Common myeloid progenitor, CD34-positive (primary cell): ENCODE measurements at regions of chr16 and their contacts with region 1.

Region 1: GRCh38 chr16:57653936-57654335 is 14.2 kb upstream of the ADGRG3 start:
- DNase-seq: peak in 2 of 3 donors; percentile 52 to 55
- H3K4me3 ChIP-seq: peak overlapping the region in 2 of 7 experiments; percentile 1 to 19
- H3K27ac ChIP-seq: peak overlapping the region in 1 of 2 experiments; percentile 77
- H3K4me1 ChIP-seq: peaks cover 0 to 47% (median 35%) of the 10 kb centered on the region in 4 experiments
- H3K27me3 ChIP-seq: no peaks in the 10 kb centered on the region

Region 2: GRCh38 chr16:57667526-57668258 is 13.8 kb after region 1 on chr16:
- CTCF ChIA-PET with region 1: interaction called, 11 read pairs
- POLR2A ChIA-PET with region 1: no interaction called
- DNase-seq: no peak
- H3K4me3 ChIP-seq: peak overlapping the region in 1 of 7 experiments; percentile 6
- H3K27ac ChIP-seq: no peak overlapping the region
- H3K4me1 ChIP-seq: peaks cover 0 to 40% (median 34%) of the 10 kb centered on the region in 4 experiments
- H3K27me3 ChIP-seq: no peaks in the 10 kb centered on the region

Region 3: GRCh38 chr16:57748596-57748995 is 94.7 kb after region 1 on chr16:
- CTCF ChIA-PET with region 1: no interaction called
- POLR2A ChIA-PET with region 1: no interaction called
- DNase-seq: no peak
- H3K4me3 ChIP-seq: no peak overlapping the region
- H3K27ac ChIP-seq: no peak overlapping the region
- H3K4me1 ChIP-seq: no peaks in the 10 kb centered on the region
- H3K27me3 ChIP-seq: no peaks in the 10 kb centered on the region